ENCODE measurements at regions of chr19 and their contacts with region 1.

Region 1: DNA sequence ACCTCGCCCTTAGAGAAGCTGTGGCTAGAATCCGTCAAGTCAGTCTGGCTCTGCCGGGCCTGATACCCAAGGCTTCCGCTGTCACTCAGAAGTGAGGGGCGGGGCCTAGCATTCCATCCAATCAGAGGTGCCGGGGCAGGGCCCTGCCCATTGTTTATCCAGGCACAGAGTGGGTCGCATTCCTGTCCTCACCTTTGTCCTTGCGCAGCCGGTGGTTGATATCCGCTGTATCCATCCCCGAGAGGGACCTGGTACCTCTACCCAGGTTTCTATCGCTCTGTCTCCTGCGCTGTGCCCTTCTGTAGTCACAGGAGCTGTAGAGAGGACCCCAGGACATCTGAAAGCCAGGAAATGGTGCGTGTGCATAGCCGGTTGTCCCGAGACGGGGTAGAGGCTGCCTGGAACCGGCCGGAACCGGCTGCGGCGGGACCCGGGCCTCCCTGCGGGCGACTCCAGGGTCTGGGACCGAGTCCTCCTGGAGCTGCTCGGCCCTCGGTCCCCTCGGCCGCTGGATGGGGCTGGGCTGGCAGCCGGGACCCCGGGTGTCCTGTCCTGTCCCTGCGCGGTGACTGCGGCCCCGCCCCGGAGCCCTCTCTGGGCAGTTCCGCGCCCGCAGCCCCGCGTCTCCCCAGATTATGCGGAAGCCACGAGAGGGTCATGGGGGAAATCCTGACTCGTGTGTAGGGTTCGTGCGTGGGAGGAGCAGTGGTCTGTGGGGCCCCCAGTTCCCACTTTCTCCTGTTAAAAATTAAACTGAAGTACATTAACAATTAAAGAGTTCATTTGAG is at the start of gene ZNF763:
- DNase-seq: peak; percentile 99
- ATAC-seq: peak; percentile 92
- H3K4me3 Mint-ChIP-seq: peak within 1 kb of the TSS; percentile 82
- H3K27ac Mint-ChIP-seq: peak within 1 kb of the TSS; percentile 96
- H3K4me1 Mint-ChIP-seq: peaks cover 22% of the 10 kb centered on the region
- H3K27me3 Mint-ChIP-seq: peaks cover 20% of the 10 kb centered on the region
- CTCF ChIP-seq: no peak
- total RNA-seq, gene ZNF763: 2.4 to 3.1 TPM (median 2.9 TPM) in 3 replicates

Region 2: GRCh38 chr19:11887611-11888531 is 77.2 kb before region 1 on chr19 and contains the start of gene ZNF69:
- CTCF ChIA-PET with region 1: interaction called, 29 read pairs
- POLR2A ChIA-PET with region 1: no interaction called
- DNase-seq: peak; percentile 98
- ATAC-seq: peak; percentile 98
- H3K4me3 Mint-ChIP-seq: peak within 1 kb of the TSS; percentile 86
- H3K27ac Mint-ChIP-seq: peak within 1 kb of the TSS; percentile 99
- H3K4me1 Mint-ChIP-seq: peaks cover 43% of the 10 kb centered on the region
- H3K27me3 Mint-ChIP-seq: no peaks in the 10 kb centered on the region; the same call in 1 of the 2 replicates
- CTCF ChIP-seq: no peak
- total RNA-seq, gene ZNF69: 24.5 to 28.7 TPM (median 24.6 TPM) in 3 replicates

Region 3: GRCh38 chr19:11942843-11943108 is 22.3 kb before region 1 on chr19:
- CTCF ChIA-PET with region 1: no interaction called
- POLR2A ChIA-PET with region 1: no interaction called
- DNase-seq: no peak
- ATAC-seq: no peak
- H3K4me3 Mint-ChIP-seq: no peak overlapping the region
- H3K27ac Mint-ChIP-seq: no peak overlapping the region
- H3K4me1 Mint-ChIP-seq: no peaks in the 10 kb centered on the region
- H3K27me3 Mint-ChIP-seq: no peaks in the 10 kb centered on the region
- CTCF ChIP-seq: no peak

Region 4: DNA sequence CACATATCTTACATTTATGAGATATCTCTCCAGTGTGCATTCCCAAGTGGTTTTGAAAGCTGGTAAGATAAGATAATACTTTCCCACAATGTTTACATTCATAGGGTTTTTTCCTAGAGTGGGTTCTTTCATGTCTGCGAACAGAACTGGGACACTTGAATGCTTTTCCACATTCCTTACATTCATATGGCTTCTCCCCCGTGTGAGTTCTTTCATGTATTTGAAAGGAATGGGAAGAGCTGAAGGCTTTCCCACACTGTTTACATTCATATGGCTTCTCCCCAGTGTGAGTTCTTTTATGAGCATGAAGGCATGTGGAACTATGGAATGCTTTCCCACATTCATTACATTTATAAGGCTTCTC is 50.7 kb after region 1 on chr19:
- CTCF ChIA-PET with region 1: no interaction called
- POLR2A ChIA-PET with region 1: no interaction called
- DNase-seq: no peak
- ATAC-seq: no peak
- H3K4me3 Mint-ChIP-seq: no peak overlapping the region
- H3K27ac Mint-ChIP-seq: no peak overlapping the region
- H3K4me1 Mint-ChIP-seq: peaks cover under 1% of the 10 kb centered on the region
- H3K27me3 Mint-ChIP-seq: peaks cover 9% of the 10 kb centered on the region
- CTCF ChIP-seq: no peak

Region 5: GRCh38 chr19:12035220-12036153 is 70.4 kb after region 1 on chr19 and contains the start of gene ZNF433:
- CTCF ChIA-PET with region 1: interaction called, 17 read pairs
- POLR2A ChIA-PET with region 1: interaction called, 4 read pairs
- DNase-seq: peak; percentile 99
- ATAC-seq: peak; percentile 98
- H3K4me3 Mint-ChIP-seq: peak within 1 kb of the TSS; percentile 83
- H3K27ac Mint-ChIP-seq: peak within 1 kb of the TSS; percentile 93
- H3K4me1 Mint-ChIP-seq: peaks cover 26% of the 10 kb centered on the region
- H3K27me3 Mint-ChIP-seq: peaks cover 32% of the 10 kb centered on the region
- CTCF ChIP-seq: no peak
- total RNA-seq, gene ZNF433: 2.9 TPM in 3 replicates

Region 6: GRCh38 chr19:12064590-12065538 is 99.8 kb after region 1 on chr19 and contains the start of gene ZNF844:
- CTCF ChIA-PET with region 1: interaction called, 26 read pairs
- POLR2A ChIA-PET with region 1: interaction called, 4 read pairs
- DNase-seq: peak; percentile 98
- ATAC-seq: peak; percentile 94
- H3K4me3 Mint-ChIP-seq: peak within 1 kb of the TSS; percentile 87
- H3K27ac Mint-ChIP-seq: peak within 1 kb of the TSS; percentile 97
- H3K4me1 Mint-ChIP-seq: peaks cover 12% of the 10 kb centered on the region
- H3K27me3 Mint-ChIP-seq: no peaks in the 10 kb centered on the region
- CTCF ChIP-seq: no peak
- total RNA-seq, gene ZNF844: 9.1 to 10.5 TPM (median 9.4 TPM) in 3 replicates

Measured in WTC11 (cell line).